SK-N-SH (cell line): ENCODE measurements at regions of chr2 and their contacts with region 1.

Region 1: DNA sequence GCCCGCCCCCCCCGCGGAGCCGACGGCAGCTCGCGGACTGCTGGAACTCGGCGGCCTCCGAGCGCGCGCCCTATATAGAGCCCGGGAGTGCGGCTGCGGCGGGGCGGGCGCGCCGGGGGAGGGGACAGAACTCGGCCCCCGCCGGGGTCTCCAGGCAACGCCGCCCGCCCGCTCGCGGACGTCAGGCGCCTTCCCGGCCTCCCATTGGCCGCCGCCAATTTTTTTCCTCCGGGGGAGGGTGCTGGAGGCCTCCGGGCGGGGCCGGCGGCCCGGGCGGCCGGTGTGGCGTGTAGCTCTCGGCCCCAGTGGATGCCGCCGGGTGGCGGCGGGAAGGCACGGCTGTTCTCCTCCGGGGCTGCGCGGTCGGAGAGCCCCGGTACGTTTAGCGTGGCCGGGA is at the start of gene ZFP36L2:
- DNase-seq: peak; percentile 99
- H3K4me3 ChIP-seq: peak within 1 kb of the TSS; percentile 95 to 97
- H3K27ac ChIP-seq: peak within 1 kb of the TSS; percentile 94 to 95
- H3K4me1 ChIP-seq: peaks cover 19 to 53% of the 10 kb centered on the region in 2 experiments
- H3K27me3 ChIP-seq: no peaks in the 10 kb centered on the region
- CTCF ChIP-seq: no peak
- EP300 ChIP-seq: 0 out of 4 replicates have a peak, but pooled peaks of 1 of the 2 experiments have one; percentile 3
- RAD21 ChIP-seq: no peak
- polyA plus RNA-seq, gene ZFP36L2: 12.5 and 18.4 TPM in 2 replicates

Region 2: DNA sequence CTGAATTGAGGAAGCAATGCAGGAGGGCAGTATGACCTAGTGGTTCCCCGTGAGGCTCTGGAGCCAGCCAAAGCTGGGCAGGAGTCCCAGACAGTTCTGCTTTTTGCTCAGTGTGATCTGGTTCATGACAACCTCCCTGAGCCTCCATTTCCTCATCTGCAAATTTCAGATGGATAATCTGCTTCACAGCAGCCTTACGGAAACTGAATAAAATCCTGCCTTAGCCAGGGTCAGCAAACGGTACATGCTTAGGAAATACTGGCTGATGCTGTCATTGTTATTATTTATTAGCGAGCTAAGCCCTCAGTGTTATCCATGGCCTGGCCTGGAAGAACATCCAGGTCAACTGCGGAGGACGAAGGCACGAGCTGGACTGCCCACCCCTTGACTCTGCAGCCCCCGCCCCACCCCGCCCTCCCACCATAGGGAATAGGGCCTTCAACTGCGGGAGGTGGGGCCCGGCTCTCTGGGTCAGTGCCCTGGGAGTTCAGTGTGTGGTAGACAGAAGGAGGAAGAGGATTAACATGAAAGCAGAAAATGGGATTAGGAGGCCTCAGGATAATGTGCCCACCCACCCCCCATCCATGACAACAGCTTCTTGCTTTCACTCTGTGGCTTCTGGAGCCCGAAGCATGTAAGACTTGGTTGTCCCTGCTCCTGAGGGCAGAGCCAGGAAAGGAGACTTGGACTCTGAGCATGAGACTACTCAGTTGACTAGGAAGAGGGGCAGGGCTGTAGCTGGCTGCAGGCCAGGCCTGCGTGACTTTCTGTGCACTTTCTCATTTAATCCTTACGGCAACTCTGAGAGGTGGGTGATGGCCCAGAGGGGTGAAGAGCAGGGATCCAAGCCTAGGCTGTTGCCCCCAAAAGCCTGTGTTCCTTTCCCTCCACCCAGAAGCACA is 1165.6 kb before region 1 on chr2:
- CTCF ChIA-PET with region 1: no interaction called
- POLR2A ChIA-PET with region 1: no interaction called
- DNase-seq: no peak
- H3K4me3 ChIP-seq: no peak overlapping the region
- H3K27ac ChIP-seq: peak overlapping the region in 1 of 2 experiments; percentile 58; a peak in 2 of 4 replicates
- H3K4me1 ChIP-seq: peaks cover 0 to 21% of the 10 kb centered on the region in 2 experiments; a peak in 1 of 4 replicates
- H3K27me3 ChIP-seq: no peaks in the 10 kb centered on the region
- CTCF ChIP-seq: no peak
- EP300 ChIP-seq: no peak
- RAD21 ChIP-seq: no peak

Region 3: DNA sequence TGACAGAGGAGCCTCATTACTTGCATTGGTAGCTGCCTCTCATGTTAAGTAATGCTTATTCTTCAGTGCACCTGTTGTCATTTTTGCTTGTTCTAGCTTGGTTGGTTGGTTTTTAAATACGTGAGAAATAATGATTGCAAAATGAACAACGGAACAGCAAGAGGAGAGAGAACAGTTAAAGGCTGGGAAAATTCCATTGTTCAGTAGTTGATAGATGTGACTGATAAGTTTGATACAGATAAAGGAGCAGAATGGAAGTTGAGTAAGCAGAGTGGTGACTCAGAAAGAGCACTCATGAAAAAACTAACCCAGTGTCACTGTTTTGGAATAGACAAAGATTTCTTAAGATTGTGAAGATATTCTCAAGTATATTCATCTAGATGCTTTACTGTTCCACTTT is 607.6 kb before region 1 on chr2:
- CTCF ChIA-PET with region 1: no interaction called
- POLR2A ChIA-PET with region 1: no interaction called
- DNase-seq: no peak
- H3K4me3 ChIP-seq: no peak overlapping the region
- H3K27ac ChIP-seq: peak overlapping the region in 1 of 2 experiments; percentile 84; a peak in 2 of 4 replicates
- H3K4me1 ChIP-seq: peaks cover 0 to 20% of the 10 kb centered on the region in 2 experiments; a peak in 2 of 4 replicates
- H3K27me3 ChIP-seq: no peaks in the 10 kb centered on the region
- CTCF ChIP-seq: no peak
- EP300 ChIP-seq: peak in 1 of 2 experiments; percentile 62; a peak in 1 of 4 replicates
- RAD21 ChIP-seq: no peak

Region 4: DNA sequence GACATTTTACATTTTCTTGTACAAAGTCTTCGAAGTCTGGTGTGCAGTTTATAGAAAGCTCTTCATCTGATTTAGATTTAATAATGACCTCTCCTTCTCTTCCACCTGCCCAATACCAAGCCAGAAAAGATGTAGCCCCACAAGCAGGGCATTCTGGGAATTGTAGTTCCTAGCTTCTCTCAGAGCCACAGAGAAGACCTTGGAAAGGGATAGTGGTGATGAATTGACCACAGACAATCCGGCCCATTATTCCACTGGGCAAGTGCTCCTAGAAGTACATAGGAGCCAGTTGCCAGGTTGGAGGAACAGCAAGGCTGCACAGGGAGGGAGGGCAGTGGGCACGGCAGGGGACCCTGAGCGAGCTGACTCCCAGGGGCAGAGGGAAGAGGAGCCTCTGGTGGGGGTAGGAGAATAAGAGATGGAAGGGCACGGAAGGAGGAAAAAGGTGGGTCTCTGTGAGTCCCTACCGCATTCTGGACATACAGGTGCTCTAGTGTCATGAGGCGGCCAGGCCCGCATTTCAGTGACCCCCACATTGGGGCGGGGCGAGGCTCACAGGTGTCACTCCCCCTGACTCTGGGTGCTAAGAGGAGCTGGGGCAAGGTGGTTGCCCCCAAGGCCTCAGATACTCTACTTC is 281.7 kb before region 1 on chr2:
- CTCF ChIA-PET with region 1: interaction called, 125 read pairs
- POLR2A ChIA-PET with region 1: interaction called, 4 read pairs
- DNase-seq: peak; percentile 56
- H3K4me3 ChIP-seq: no peak overlapping the region
- H3K27ac ChIP-seq: no peak overlapping the region
- H3K4me1 ChIP-seq: peaks cover 1 to 3% of the 10 kb centered on the region in 2 experiments; a peak in 2 of 4 replicates
- H3K27me3 ChIP-seq: no peaks in the 10 kb centered on the region
- CTCF ChIP-seq: no peak
- EP300 ChIP-seq: no peak
- RAD21 ChIP-seq: no peak

Region 5: GRCh38 chr2:43005245-43005974 is 221.1 kb before region 1 on chr2:
- CTCF ChIA-PET with region 1: interaction called, 22 read pairs
- POLR2A ChIA-PET with region 1: interaction called, 3 read pairs
- DNase-seq: peak; percentile 34
- H3K4me3 ChIP-seq: no peak overlapping the region
- H3K27ac ChIP-seq: no peak overlapping the region
- H3K4me1 ChIP-seq: peaks cover 0 to 6% of the 10 kb centered on the region in 2 experiments; a peak in 1 of 4 replicates
- H3K27me3 ChIP-seq: no peaks in the 10 kb centered on the region
- CTCF ChIP-seq: no peak
- EP300 ChIP-seq: no peak
- RAD21 ChIP-seq: no peak

Region 6: GRCh38 chr2:43032213-43033015 is 194.1 kb before region 1 on chr2:
- CTCF ChIA-PET with region 1: interaction called, 106 read pairs
- POLR2A ChIA-PET with region 1: interaction called, 4 read pairs
- DNase-seq: no peak
- H3K4me3 ChIP-seq: no peak overlapping the region
- H3K27ac ChIP-seq: no peak overlapping the region
- H3K4me1 ChIP-seq: peaks cover 0 to 12% of the 10 kb centered on the region in 2 experiments; a peak in 1 of 4 replicates
- H3K27me3 ChIP-seq: no peaks in the 10 kb centered on the region
- CTCF ChIP-seq: no peak
- EP300 ChIP-seq: no peak
- RAD21 ChIP-seq: no peak

Region 7: GRCh38 chr2:43239981-43240761 is 13.6 kb after region 1 on chr2:
- CTCF ChIA-PET with region 1: interaction called, 67 read pairs
- POLR2A ChIA-PET with region 1: interaction called, 8 read pairs
- DNase-seq: no peak
- H3K4me3 ChIP-seq: no peak overlapping the region
- H3K27ac ChIP-seq: no peak overlapping the region
- H3K4me1 ChIP-seq: peaks cover 0 to 6% of the 10 kb centered on the region in 2 experiments; a peak in 1 of 4 replicates
- H3K27me3 ChIP-seq: no peaks in the 10 kb centered on the region
- CTCF ChIP-seq: 0 out of 2 replicates have a peak, but pooled peaks have one; percentile 21
- EP300 ChIP-seq: no peak
- RAD21 ChIP-seq: no peak; the same call in 1 of the 2 replicates

Region 8: GRCh38 chr2:43312755-43313641 is 86.4 kb after region 1 on chr2:
- CTCF ChIA-PET with region 1: interaction called, 16 read pairs
- POLR2A ChIA-PET with region 1: interaction called, 11 read pairs
- DNase-seq: peak; percentile 49
- H3K4me3 ChIP-seq: no peak overlapping the region
- H3K27ac ChIP-seq: peak overlapping the region; percentile 47 to 98; a peak in 3 of 4 replicates
- H3K4me1 ChIP-seq: peaks cover 10 to 22% of the 10 kb centered on the region in 2 experiments
- H3K27me3 ChIP-seq: no peaks in the 10 kb centered on the region
- CTCF ChIP-seq: no peak
- EP300 ChIP-seq: peak; percentile 72 to 92
- RAD21 ChIP-seq: peak; percentile 16

Region 9: DNA sequence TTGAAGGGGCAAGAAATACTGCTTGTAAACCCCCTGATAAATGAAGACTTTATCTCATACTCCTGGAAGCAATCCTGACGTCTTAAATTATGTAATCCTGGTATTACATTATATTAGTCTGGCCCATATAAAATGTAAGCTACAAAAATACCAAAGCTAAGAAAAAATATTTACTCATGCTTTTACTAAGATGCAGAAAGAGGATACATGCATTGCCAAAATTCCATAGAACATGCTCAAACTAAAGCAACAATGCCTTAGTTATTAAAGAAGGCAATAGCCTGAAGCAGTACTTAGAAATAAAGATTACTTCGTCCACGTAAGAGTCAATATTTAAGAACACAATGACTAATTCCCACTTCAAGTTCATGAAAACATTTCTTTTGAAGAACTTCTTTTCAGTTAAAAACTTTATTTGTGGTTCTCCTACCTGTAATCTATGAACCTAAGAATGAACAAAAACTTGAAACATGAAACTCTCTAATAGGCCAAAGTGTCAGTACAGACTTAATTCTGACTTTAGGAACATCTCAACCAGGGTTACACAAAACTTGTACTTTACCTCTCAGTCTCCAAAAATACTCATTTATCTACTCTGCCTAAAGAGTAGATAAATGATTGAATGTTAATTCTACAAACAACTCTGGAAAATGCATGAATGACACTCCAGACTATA is 252.0 kb after region 1 on chr2:
- CTCF ChIA-PET with region 1: interaction called, 108 read pairs
- POLR2A ChIA-PET with region 1: interaction called, 14 read pairs
- DNase-seq: no peak
- H3K4me3 ChIP-seq: no peak overlapping the region
- H3K27ac ChIP-seq: no peak overlapping the region
- H3K4me1 ChIP-seq: peaks cover 0 to 10% of the 10 kb centered on the region in 2 experiments; a peak in 2 of 4 replicates
- H3K27me3 ChIP-seq: no peaks in the 10 kb centered on the region
- CTCF ChIP-seq: no peak
- EP300 ChIP-seq: no peak
- RAD21 ChIP-seq: no peak